ENCODE measurements at regions of chr12 and their contacts with region 1.

Region 1: GRCh38 chr12:9741726-9742125 is 8.8 kb upstream of the CLECL1 start:
- DNase-seq: no peak
- H3K4me3 ChIP-seq: no peak overlapping the region
- H3K27ac ChIP-seq: no peak overlapping the region
- H3K4me1 ChIP-seq: peaks cover 7% of the 10 kb centered on the region
- H3K27me3 ChIP-seq: no peaks in the 10 kb centered on the region
- CTCF ChIP-seq: no peak
- POLR2A ChIP-seq: no peak

Region 2: GRCh38 chr12:9156119-9156518 is 585.6 kb before region 1 on chr12:
- CTCF ChIA-PET with region 1: no interaction called
- POLR2A ChIA-PET with region 1: no interaction called
- dilution Hi-C with region 1: no loop called
- intact Hi-C with region 1: no loop called
- DNase-seq: no peak
- H3K4me3 ChIP-seq: no peak overlapping the region
- H3K27ac ChIP-seq: no peak overlapping the region
- H3K4me1 ChIP-seq: no peaks in the 10 kb centered on the region
- H3K27me3 ChIP-seq: no peaks in the 10 kb centered on the region
- CTCF ChIP-seq: no peak
- POLR2A ChIP-seq: no peak

Region 3: GRCh38 chr12:9404469-9405260 is 337.1 kb before region 1 on chr12:
- CTCF ChIA-PET with region 1: no interaction called
- POLR2A ChIA-PET with region 1: no interaction called
- dilution Hi-C with region 1: no loop called
- intact Hi-C with region 1: no loop called
- DNase-seq: no peak
- H3K4me3 ChIP-seq: no peak overlapping the region
- H3K27ac ChIP-seq: no peak overlapping the region
- H3K4me1 ChIP-seq: no peaks in the 10 kb centered on the region
- H3K27me3 ChIP-seq: no peaks in the 10 kb centered on the region
- CTCF ChIP-seq: no peak
- POLR2A ChIP-seq: no peak

Region 4: DNA sequence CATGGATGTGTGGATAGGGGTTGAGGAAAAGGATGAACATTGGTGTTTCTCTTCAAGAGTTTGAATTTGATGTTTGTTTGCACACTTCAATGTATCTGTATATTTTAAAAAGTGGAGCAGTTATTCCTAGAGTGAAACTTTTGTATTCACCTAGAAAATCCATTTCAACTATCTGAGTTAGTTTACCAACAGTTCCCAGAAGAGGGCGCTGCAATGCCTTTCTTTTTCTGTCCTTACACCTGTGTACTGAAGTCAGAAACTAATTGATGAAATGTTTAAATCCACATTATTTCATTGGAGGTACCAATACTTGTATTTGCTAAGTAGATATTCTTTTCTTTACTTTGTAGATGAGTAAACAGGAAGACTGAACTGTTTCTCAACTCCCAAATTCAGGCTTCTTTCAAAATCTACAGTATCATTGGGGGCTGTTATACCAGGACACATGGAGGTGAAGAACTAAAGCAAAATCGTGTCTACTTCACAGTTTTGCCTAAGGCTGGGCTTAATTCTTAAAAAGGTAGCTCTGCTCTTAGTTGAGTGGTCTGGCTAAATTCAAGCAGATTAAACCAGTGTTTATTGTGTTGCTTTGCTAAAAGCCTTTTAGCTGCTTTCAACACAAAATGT is 107.4 kb before region 1 on chr12:
- CTCF ChIA-PET with region 1: interaction called, 24 read pairs
- POLR2A ChIA-PET with region 1: no interaction called
- dilution Hi-C with region 1: no loop called
- intact Hi-C with region 1: loop called (anchors 2 kb)
- DNase-seq: peak; percentile 70
- H3K4me3 ChIP-seq: no peak overlapping the region
- H3K27ac ChIP-seq: no peak overlapping the region
- H3K4me1 ChIP-seq: no peaks in the 10 kb centered on the region
- H3K27me3 ChIP-seq: no peaks in the 10 kb centered on the region
- CTCF ChIP-seq: peak; percentile 55 to 57
- POLR2A ChIP-seq: no peak

Region 5: DNA sequence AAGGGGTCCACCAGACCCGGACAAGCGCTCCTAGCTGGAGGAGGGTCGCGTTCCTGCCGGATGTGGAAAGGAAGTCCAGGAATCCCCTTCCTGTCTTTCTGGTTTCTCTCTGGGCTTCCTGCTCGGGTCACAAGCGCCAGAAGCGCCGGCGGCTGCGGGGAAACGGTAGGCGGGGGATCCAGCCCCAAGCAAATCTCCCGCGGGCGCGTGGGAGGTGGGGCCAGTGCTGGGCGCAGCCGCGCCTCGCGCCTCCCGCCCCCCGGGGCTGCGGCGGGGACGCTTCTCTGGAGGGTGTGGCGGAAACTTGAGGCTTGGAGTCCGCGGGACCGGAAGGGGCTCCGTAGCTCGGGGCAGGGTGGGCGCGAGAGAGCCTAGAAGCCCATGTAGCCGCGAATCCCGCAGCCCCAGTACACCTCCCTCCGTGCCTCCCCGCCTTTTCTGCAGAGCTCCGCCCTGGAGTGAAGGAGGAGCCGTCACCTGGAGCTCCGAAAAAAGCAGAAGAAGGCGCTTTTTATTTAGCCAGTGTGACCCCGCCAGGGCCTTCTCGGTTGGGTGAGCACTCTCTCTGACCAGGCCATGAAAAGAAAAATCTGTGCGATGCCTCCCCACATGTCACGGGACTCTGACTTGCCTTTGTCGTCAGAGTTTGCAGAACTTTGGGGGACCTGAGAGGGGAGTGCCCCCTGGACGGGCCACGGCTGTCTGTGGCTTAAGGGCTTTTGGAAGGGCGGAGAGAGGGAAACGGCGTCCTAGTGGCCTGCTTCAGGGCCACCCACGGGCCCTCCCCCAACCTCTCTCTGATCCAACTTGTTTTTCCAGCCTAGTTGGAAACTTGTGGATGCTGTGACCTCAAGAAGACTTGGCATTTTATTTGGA is 93.7 kb before region 1 on chr12:
- CTCF ChIA-PET with region 1: interaction called, 11 read pairs
- POLR2A ChIA-PET with region 1: no interaction called
- dilution Hi-C with region 1: no loop called
- intact Hi-C with region 1: no loop called
- DNase-seq: peak; percentile 54
- H3K4me3 ChIP-seq: peak overlapping the region; percentile 57 to 91 (median 85)
- H3K27ac ChIP-seq: peak overlapping the region; percentile 72
- H3K4me1 ChIP-seq: peaks cover 40% of the 10 kb centered on the region
- H3K27me3 ChIP-seq: no peaks in the 10 kb centered on the region
- CTCF ChIP-seq: no peak
- POLR2A ChIP-seq: peak; percentile 50

Region 6: GRCh38 chr12:9721394-9722092 is 20.2 kb before region 1 on chr12:
- CTCF ChIA-PET with region 1: interaction called, 15 read pairs
- POLR2A ChIA-PET with region 1: no interaction called
- dilution Hi-C with region 1: no loop called
- intact Hi-C with region 1: no loop called
- DNase-seq: peak; percentile 76
- H3K4me3 ChIP-seq: peak overlapping the region in 1 of 3 experiments; percentile 6
- H3K27ac ChIP-seq: peak overlapping the region; percentile 82
- H3K4me1 ChIP-seq: peaks cover 23% of the 10 kb centered on the region
- H3K27me3 ChIP-seq: no peaks in the 10 kb centered on the region
- CTCF ChIP-seq: no peak
- POLR2A ChIP-seq: no peak

Region 7: DNA sequence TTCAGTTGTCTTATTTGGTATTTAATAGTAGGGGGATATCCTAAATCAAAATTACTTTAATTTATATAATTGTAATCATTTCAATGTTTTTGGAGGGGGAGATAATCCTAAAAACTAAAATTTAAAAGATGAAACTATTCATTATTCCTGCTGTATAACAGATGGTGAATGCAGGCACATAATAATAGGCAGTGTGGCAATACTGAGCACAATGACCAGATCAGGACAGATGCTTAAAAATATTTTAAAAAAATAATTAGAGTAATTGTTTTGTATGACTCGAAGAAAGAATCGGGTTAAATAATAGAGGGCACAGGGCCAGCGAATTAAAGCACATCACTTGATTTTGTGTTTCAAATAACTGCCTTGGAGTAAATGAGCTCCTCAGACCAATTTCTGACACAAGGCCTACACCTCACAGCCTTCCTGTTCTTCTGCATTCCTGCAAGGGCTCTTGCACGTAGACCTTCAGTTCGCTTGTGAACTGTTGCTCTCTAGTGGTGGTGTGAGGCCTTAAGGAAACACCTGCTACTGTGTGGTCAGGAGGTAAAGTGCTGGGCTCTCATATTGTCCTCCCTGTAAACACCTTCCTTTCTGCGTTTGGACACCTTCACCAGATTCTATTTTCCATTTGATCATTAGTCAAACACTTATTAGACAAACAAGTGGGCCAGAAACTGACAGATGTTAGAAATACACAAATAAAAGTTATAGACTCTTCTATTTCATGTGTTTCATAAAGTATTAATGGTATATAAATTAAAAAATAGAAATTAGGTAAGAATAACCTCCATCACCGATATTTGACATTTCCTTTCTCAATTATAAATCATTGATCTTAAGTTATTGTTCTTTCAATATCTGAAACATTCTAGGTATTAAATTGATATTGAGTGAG is 56.2 kb after region 1 on chr12:
- CTCF ChIA-PET with region 1: interaction called, 332 read pairs
- POLR2A ChIA-PET with region 1: no interaction called
- dilution Hi-C with region 1: no loop called
- intact Hi-C with region 1: no loop called
- DNase-seq: peak; percentile 87
- H3K4me3 ChIP-seq: no peak overlapping the region
- H3K27ac ChIP-seq: peak overlapping the region; percentile 1
- H3K4me1 ChIP-seq: peaks cover 39% of the 10 kb centered on the region
- H3K27me3 ChIP-seq: no peaks in the 10 kb centered on the region
- CTCF ChIP-seq: peak; percentile 54 to 67
- POLR2A ChIP-seq: no peak

Region 8: DNA sequence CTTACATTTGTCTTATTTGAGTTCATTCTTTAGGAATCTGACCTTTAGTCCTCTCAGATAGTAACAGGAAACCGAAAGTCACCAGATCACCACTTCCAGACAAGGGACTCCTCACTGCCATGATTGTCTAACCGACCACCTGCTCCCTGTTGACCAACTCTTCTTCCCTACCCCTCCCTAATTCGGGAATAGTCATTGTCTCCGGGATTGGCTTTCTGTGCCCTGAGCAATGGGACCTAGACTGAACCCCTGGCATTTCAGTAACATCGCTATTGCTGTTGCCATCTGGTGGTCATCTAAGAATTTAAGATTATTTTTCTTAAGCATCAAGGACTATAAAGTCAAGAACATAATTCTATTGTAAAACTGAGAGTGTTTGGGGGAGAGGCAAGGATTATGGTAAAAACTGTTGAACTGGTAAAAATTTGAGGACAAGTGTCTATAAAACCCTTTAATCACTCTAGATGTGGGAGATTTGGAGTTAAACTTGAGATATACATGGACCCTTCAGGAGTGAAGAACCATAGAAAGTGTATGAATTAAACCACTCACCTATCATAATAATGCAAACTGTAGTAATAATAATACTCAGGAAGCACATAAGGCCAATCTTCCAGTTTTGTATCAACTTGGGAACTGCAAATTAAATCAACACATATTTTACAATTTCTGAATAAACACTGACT is 184.1 kb after region 1 on chr12:
- CTCF ChIA-PET with region 1: interaction called, 10 read pairs
- POLR2A ChIA-PET with region 1: no interaction called
- dilution Hi-C with region 1: no loop called
- intact Hi-C with region 1: no loop called
- DNase-seq: peak; percentile 60
- H3K4me3 ChIP-seq: no peak overlapping the region
- H3K27ac ChIP-seq: no peak overlapping the region
- H3K4me1 ChIP-seq: no peaks in the 10 kb centered on the region
- H3K27me3 ChIP-seq: peaks cover 0 to 2% of the 10 kb centered on the region in 2 experiments
- CTCF ChIP-seq: peak; percentile 31 to 39
- POLR2A ChIP-seq: no peak